ENCODE measurements at regions of chr7 and their contacts with region 1.

Region 1: GRCh38 chr7:109246330-109247077 is 676.8 kb downstream of the DNAJB9 start:
- DNase-seq: peak; percentile 50 to 59
- H3K4me3 ChIP-seq: peak overlapping the region; percentile 28; the same call in 1 of the 2 replicates
- H3K27ac ChIP-seq: peak overlapping the region; percentile 54
- H3K4me1 ChIP-seq: peaks cover 21% of the 10 kb centered on the region
- H3K27me3 ChIP-seq: no peaks in the 10 kb centered on the region
- CTCF ChIP-seq: no peak

Region 2: DNA sequence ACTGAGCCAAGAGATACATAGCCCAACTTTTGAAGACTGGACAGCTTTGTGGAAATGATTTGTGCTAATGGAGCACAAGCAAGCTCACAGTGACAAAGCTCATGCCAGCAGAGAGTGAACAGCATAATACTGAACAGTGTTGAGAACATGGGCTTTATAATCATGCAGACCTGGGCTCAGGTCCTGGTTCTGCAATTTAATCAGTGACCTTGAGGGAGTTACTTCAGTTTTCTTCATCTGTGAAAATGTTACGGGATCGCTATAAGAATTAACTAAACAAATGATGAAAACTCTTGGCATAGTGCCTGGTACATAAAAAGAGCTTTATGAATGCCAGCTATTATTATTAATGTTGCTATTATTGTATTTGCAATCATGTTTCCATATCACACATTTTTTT is 1153.9 kb after region 1 on chr7:
- CTCF ChIA-PET with region 1: interaction called, 13 read pairs
- POLR2A ChIA-PET with region 1: no interaction called
- intact Hi-C with region 1: no loop called
- DNase-seq: no peak
- H3K4me3 ChIP-seq: no peak overlapping the region
- H3K27ac ChIP-seq: no peak overlapping the region
- H3K4me1 ChIP-seq: no peaks in the 10 kb centered on the region
- H3K27me3 ChIP-seq: no peaks in the 10 kb centered on the region
- CTCF ChIP-seq: no peak

Measured in PC-9 (cell line).